Lower lobe of right lung (tissue), 2 donors: ENCODE measurements at regions of chr9 and their contacts with region 1.

Region 1: GRCh38 chr9:3240656-3241268 is 285.0 kb downstream of the RFX3 start:
- DNase-seq: peak; percentile 72
- ATAC-seq: peak; percentile 94 to 96
- H3K4me3 ChIP-seq: no peak overlapping the region
- H3K27ac ChIP-seq: no peak overlapping the region
- H3K4me1 ChIP-seq: no peaks in the 10 kb centered on the region
- H3K27me3 ChIP-seq: no peaks in the 10 kb centered on the region
- CTCF ChIP-seq: peak; percentile 82

Region 2: DNA sequence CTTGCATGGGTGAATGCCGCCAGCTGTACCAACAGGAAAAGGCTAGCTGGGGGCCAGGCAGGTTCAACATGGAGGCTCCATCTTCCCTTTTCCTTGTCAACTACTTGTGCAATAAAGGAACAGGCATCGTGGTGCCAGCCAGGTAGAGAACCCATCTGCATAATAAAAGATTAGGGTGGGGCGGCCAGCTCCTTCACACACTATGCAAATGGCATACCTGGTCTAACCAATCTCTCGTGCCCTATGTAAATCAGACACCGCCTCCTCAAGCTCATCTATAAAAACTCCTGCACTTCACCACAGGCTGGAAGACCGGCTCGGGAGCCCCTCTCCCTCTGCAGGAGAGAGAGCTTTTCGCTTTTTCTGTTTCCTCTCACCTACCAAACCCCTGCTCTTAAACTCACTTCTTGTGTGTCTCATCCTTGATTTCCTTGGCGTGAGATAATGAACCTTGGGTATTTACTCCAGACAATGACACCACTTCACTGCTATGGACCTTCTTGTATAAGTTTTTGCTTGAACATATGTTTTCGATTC is 152.5 kb before region 1 on chr9:
- intact Hi-C with region 1: no loop called
- DNase-seq: no peak
- ATAC-seq: no peak
- H3K4me3 ChIP-seq: no peak overlapping the region
- H3K27ac ChIP-seq: no peak overlapping the region
- H3K4me1 ChIP-seq: no peaks in the 10 kb centered on the region
- H3K27me3 ChIP-seq: no peaks in the 10 kb centered on the region
- CTCF ChIP-seq: no peak

Region 3: DNA sequence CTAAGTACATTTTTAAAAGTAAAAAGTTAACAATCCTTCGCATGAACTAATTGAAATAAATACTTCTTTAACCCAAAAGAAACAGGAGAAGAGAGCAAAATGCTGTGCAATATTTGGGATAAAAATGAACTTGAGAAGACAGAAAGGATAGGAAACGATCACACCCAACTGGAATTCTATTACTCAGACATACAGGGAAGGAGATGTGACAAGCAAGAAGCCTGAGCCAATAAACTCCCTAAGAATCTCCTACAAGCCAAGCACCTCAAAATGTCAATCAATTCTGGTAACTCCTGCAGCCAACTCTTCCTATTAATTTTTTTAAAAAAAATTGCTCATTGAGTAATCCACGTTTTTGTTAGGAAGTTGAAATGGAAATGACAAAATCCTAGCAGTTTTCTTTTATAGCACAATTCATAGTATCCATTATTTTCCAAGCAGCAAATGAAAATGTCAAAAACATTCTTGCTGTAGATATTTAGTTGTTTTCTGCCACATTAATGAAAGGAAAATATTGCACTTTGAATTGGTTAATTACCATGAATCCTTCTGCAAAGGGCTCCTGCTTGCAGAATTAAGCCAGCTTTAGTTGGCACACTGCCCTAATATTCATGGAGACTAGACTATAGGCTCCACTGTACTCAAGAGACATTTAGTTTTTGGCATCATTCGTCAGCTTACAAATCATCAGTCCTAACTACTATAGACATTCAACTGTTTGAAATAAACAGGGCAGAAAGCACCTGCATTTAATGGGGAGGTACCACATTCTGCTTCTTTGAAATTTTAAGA is 196.1 kb after region 1 on chr9:
- intact Hi-C with region 1: loop called (anchors 10 kb)
- DNase-seq: no peak
- ATAC-seq: no peak
- H3K4me3 ChIP-seq: no peak overlapping the region
- H3K27ac ChIP-seq: no peak overlapping the region
- H3K4me1 ChIP-seq: no peaks in the 10 kb centered on the region
- H3K27me3 ChIP-seq: no peaks in the 10 kb centered on the region
- CTCF ChIP-seq: no peak

Region 4: DNA sequence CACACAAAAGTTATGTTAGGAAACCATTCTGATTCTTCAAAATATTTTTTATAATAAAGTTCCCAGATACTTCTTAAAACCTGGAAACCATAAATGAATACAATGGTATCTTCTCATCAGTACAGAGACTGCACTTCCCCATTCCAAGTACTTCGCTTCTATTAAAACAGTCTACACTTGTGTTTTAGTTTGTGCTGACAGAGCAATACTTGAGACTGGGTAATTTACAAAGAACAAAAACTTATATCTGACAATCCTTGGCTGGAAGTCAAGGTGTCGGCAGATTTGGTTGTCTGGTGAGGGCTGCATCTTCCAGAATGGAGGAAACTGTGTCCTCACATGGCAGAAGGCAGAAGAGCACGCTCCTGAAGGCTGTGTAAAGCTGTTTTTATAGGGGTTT is 215.0 kb after region 1 on chr9:
- intact Hi-C with region 1: no loop called
- DNase-seq: no peak
- ATAC-seq: no peak
- H3K4me3 ChIP-seq: no peak overlapping the region
- H3K27ac ChIP-seq: no peak overlapping the region
- H3K4me1 ChIP-seq: no peaks in the 10 kb centered on the region
- H3K27me3 ChIP-seq: no peaks in the 10 kb centered on the region
- CTCF ChIP-seq: no peak